GM18951 (cell line): ENCODE measurements at regions of chr1 and their contacts with region 1.

Region 1: GRCh38 chr1:113669984-113670383 is 89.3 kb downstream of the PHTF1 start:
- POLR2A ChIP-seq: no peak

Region 2: DNA sequence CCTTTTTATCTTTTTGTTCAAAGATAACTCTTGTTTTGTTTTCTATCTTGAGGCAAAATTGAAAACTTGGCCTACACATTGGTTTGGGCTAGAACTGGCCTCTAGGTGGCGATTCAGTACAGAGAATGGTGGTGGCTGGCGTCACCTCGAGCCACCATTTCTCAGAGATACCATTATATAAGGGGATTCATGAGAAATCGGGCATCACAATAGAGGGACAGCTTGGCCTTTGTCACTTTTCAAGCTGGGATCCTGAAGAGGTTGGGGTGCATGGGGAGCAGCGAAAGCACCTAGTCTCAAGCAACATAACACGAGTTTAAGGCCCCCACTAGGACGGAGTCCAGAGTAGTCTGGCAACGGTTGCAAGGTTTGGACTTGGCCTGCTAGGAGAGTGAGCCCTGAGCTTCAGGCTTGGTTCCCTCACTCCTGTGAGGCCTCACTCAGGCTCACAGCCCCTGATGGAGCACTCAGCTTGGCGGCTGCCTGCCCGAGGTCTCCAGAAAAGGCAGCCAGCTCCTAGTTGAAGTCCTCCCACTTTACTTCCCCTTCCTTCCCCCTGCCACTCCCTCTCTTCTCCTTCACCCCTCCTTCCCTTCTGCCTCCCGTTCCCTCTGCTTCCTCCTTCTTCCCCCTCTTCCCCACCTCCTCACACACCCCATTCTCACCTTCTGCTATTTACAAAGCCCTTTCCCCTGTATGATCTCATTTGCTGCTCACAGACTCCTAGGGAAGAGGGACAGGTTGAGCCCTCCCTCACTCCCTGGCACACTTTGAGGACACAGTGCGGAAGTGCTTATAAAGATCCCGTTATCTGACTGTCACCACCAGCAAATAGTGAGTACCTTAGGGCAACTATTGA is 529.2 kb before region 1 on chr1:
- in situ Hi-C with region 1: loop called (anchors 5 kb)
- POLR2A ChIP-seq: no peak

Region 3: GRCh38 chr1:113479713-113480676 is 190.0 kb before region 1 on chr1:
- in situ Hi-C with region 1: no loop called
- POLR2A ChIP-seq: no peak

Region 4: GRCh38 chr1:114009393-114009792 is 339.4 kb after region 1 on chr1:
- in situ Hi-C with region 1: no loop called
- POLR2A ChIP-seq: no peak

Region 5: DNA sequence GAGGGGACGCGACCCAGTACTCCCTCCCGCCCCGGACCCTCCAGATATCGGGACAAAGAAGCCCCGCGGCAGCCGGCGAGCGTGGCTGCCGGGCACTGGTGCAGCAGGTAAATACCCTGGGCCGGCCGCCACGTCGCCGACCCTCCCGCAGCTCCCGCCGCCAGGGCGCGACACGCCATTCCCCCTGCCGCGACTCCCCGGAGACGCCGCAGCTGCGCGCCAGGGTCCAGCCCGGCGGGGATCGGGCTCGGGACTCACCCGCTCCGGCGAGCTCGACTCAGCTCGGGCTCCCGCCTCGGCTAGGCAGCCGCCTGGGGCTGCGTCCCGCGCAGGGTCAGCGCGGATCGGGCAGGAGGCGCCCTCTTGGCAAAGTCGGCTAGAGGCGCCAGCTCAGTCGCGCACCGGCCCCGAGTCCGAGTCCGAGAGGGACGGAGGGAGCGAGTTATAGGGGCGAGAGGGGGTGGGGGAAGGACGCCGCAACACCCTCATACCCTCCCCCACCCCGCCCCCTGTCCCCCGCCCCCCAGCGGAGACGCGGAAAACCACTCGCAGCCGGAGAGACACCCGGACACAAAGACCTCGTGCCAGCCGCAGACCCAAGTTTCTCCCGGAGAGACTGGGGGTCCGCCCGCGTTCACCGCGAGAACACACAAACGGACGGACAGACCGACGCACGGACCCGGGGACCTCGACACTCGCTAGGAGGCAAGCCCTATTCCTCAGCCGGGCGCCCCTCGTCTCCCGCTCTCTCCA is 482.7 kb after region 1 on chr1:
- in situ Hi-C with region 1: no loop called
- POLR2A ChIP-seq: no peak